Dendritic cell treated with granulocyte-macrophage colony-stimulating factor and Interleukin-4, amounts not matched to agents 40 ng/mL and 50 ng/mL, for 4 days (primary cell): ENCODE measurements at regions of chr6 and their contacts with region 1.

Region 1: GRCh38 chr6:155314092-155314772 is at the start of gene TFB1M:
- H3K4me3 Mint-ChIP-seq: peak within 1 kb of the TSS; percentile 97
- H3K27ac Mint-ChIP-seq: peak within 1 kb of the TSS; percentile 97
- H3K4me1 Mint-ChIP-seq: peaks cover 18% of the 10 kb centered on the region
- H3K27me3 Mint-ChIP-seq: no peaks in the 10 kb centered on the region

Region 2: GRCh38 chr6:154329350-154330170 is 984.7 kb before region 1 on chr6:
- intact Hi-C with region 1: loop called (anchors 10 kb)
- H3K4me3 Mint-ChIP-seq: no peak overlapping the region
- H3K27ac Mint-ChIP-seq: peak overlapping the region; percentile 24
- H3K4me1 Mint-ChIP-seq: peaks cover 68% of the 10 kb centered on the region
- H3K27me3 Mint-ChIP-seq: no peaks in the 10 kb centered on the region

Region 3: DNA sequence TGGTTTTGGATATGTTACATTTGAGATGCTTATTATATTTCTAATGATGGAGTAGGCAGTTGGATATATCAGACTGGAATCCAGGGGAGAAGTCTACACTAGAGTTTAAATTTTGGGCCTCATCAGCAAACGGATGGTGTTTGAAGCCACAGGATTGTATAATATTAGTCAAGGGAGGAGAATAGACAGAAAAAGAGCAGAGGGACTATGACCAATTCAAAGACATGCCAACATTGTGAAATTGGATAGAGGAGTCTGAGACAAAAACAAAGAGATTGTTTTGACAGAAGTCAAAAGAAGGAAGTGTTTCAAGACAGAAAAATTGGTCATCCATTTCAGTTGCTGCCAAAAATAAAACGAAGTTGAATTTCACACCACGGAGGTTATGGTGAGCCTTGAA is 74.9 kb after region 1 on chr6:
- intact Hi-C with region 1: no loop called
- H3K4me3 Mint-ChIP-seq: no peak overlapping the region
- H3K27ac Mint-ChIP-seq: no peak overlapping the region
- H3K4me1 Mint-ChIP-seq: no peaks in the 10 kb centered on the region
- H3K27me3 Mint-ChIP-seq: no peaks in the 10 kb centered on the region

Region 4: DNA sequence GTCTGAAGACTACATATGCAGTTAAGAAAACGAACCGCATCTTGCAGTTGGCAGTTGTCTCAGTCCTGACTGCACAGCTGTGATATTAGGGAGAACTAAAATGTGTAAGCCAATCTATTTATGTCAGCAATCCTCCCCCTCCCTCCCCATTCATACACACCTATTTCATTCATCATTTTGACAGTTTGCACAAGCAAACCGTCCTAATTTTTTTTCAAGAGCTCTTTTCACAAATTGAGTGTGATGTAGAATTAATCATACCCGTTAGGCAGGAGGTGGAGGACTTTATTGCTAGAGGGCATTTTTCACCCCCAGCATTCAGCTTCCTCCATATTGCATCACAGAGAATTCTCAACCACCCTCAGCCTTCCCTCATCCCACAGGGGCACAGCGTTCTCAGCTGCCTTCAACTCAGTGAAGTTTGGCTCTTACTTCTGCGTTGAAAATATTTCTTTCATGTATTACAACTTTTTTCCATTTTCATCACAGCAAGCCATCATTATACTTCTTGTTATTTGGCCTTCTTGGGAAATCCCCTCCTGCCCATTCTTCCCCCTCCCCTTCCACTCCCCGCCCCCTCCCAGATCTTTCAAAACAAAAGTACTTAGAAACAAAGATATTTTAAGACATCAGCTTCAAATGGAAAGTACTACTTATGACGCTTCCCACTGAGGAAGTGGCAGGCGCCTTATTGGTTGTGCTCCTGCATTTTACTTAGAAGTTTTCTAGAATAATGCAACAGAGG is 104.0 kb after region 1 on chr6:
- intact Hi-C with region 1: loop called (anchors 5 kb)
- H3K4me3 Mint-ChIP-seq: peak overlapping the region; percentile 72
- H3K27ac Mint-ChIP-seq: peak overlapping the region; percentile 93
- H3K4me1 Mint-ChIP-seq: peaks cover 24% of the 10 kb centered on the region
- H3K27me3 Mint-ChIP-seq: no peaks in the 10 kb centered on the region

Region 5: GRCh38 chr6:156776840-156777576 is 1462.8 kb after region 1 on chr6 and contains the start of gene ARID1B:
- intact Hi-C with region 1: loop called (anchors 5 kb)
- H3K4me3 Mint-ChIP-seq: peak within 1 kb of the TSS; percentile 97
- H3K27ac Mint-ChIP-seq: peak within 1 kb of the TSS; percentile 97
- H3K4me1 Mint-ChIP-seq: peaks cover 26% of the 10 kb centered on the region
- H3K27me3 Mint-ChIP-seq: peaks cover 21% of the 10 kb centered on the region

Region 6: DNA sequence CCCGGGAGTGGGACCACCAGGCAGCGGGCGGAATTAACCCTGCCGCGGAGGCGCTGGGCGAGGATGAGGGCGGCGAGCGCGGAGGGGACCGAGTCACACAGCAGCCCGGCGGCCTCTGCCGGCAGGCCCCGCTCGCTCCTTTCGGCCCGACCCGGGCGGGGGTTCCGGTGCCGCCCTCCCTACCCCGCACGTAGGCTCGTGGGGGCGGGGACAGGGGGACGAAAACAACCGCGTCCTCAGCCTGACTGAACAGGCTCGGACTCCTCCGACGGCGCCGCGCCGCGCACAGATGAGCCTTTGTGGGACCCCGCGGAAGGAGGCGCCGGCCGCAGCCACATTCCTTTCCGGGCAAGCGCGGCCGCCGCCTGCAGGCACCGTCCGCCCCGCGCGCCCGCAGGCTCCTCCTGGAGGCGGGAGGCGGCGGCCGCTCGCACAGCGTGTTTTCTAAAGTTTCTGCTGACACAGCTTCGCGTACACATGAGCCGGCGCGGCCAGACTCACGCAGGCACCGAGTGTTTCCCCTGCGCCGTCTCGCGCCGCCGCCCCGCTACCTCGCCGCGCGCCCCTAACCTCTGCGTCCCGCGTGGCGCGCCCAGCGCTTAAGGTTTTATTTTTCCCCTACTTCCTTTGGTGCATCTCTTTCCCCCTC is 1707.2 kb after region 1 on chr6:
- intact Hi-C with region 1: loop called (anchors 5 kb)
- H3K4me3 Mint-ChIP-seq: peak overlapping the region; percentile 87
- H3K27ac Mint-ChIP-seq: peak overlapping the region; percentile 99
- H3K4me1 Mint-ChIP-seq: peaks cover 28% of the 10 kb centered on the region
- H3K27me3 Mint-ChIP-seq: no peaks in the 10 kb centered on the region